HepG2 (cell line): ENCODE measurements at regions of chr7 and their contacts with region 1.

Region 1: DNA sequence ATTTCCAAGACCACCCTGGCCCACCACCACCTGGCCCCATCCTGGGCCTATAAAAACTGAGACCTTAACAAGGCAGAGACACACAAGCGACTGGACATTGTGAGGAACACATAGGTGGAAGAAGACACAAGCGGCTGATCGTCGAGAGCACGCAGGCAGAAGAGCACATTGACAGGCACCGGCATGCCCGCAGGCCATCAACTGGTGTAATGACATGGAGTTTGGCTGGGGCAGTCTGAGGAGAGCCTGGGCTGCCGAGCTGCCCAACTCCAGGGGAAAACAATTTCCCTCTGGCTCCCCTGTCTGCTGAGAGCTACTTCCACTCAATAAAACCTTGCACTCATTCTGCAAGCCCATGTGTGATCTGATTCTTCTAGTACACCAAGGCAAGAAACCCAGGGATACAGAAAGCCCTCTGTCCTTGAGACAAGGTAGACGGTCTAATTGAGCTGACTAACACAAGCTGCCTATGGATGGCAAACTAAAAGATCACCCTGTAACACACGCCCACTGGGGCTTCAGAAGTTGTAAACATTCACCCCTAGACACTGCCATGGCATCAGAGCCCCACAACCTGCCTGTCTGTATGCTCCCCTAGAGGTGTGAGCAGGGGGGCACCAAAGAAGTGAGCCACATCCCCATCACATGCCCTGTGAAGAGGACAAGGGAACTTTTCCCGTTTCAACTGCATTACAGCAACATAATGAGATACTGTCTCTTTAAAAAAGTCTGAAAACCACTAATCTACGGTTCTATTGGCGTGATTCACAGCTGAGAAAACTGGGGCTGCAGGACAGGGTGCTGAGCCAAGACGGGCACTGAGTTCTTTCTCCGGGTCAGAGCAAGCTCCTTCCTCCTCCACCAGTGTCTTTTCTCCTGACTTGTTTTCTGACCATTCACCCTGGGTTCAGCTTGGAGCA is 18.5 kb upstream of the TNS3 start:
- DNase-seq: no peak
- ATAC-seq: no peak
- H3K4me3 ChIP-seq: no peak overlapping the region
- H3K27ac ChIP-seq: no peak overlapping the region
- H3K4me1 ChIP-seq: peaks cover 72% of the 10 kb centered on the region
- H3K27me3 ChIP-seq: no peaks in the 10 kb centered on the region
- CTCF ChIP-seq: no peak
- EP300 ChIP-seq: no peak
- POLR2A ChIP-seq: no peak
- RAD21 ChIP-seq: no peak

Region 2: DNA sequence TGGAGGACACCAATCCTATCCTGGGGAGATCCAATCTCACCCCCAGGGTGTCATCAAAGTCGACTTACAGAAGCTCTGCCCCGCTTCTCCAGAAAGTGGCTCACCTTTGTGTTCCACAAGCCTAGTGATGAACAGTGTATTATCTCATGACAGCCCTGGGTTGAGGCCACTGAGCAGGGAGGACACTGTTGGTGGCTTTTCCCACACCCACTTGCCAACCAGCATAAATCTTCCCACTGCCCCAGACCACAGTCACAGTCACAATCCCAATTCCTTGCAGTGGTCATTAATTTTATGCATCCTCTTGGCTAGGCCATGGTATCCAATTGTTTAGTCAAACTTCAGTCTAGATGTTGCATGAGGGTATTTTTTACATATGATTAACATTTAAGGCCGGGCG is 36.9 kb before region 1 on chr7:
- CTCF ChIA-PET with region 1: no interaction called
- POLR2A ChIA-PET with region 1: no interaction called
- in situ Hi-C with region 1: no loop called
- intact Hi-C with region 1: no loop called
- DNase-seq: no peak
- ATAC-seq: no peak
- H3K4me3 ChIP-seq: no peak overlapping the region
- H3K27ac ChIP-seq: no peak overlapping the region
- H3K4me1 ChIP-seq: peaks cover 54% of the 10 kb centered on the region
- H3K27me3 ChIP-seq: no peaks in the 10 kb centered on the region
- CTCF ChIP-seq: no peak
- EP300 ChIP-seq: no peak
- POLR2A ChIP-seq: no peak
- RAD21 ChIP-seq: no peak

Region 3: DNA sequence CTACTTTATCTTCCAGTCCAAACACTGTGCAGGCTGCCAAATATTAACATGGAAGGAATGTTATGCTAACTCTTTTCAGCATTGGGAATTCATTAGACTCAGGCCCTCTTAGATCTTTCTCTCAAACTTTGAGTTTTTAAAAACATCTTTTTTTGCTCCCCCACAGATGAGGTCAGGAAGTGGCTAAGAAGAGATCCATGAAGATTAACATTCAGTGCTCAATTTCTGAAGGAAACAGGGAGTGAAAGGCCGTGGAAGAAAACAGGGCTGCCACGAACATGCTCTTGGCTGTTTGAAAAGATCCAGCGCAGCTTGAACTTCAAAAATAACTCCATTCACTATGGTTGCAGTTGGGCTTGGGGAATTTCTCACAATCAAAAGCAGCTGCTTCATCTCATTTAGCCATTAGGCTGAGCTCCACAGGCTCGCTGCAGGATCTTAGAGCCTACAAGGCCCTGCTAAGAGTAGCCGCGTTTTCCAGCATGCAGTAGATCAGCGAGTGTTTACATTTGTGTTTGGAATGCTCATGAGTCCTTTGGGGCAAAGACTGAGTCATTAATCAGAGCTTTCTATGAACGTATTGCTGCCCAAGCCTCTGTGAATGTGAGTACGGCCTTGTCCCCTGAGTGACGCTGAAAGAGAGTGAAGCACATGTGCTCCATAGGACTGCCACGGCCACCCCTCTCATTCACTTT is 22.6 kb after region 1 on chr7:
- CTCF ChIA-PET with region 1: no interaction called
- POLR2A ChIA-PET with region 1: interaction called, 4 read pairs
- in situ Hi-C with region 1: no loop called
- intact Hi-C with region 1: loop called (anchors 2 kb)
- DNase-seq: peak; percentile 89
- ATAC-seq: peak; percentile 93
- H3K4me3 ChIP-seq: peak overlapping the region in 2 of 3 experiments; percentile 13 to 46; a peak in 2 of 6 replicates
- H3K27ac ChIP-seq: peak overlapping the region; percentile 71
- H3K4me1 ChIP-seq: peaks cover 64% of the 10 kb centered on the region
- H3K27me3 ChIP-seq: no peaks in the 10 kb centered on the region
- CTCF ChIP-seq: no peak
- EP300 ChIP-seq: peak in 1 of 2 experiments; percentile 58; a peak in 1 of 4 replicates
- POLR2A ChIP-seq: peak in 1 of 2 experiments; percentile 54; a peak in 2 of 4 replicates
- RAD21 ChIP-seq: no peak

Region 4: GRCh38 chr7:47669061-47669891 is 68.8 kb after region 1 on chr7:
- CTCF ChIA-PET with region 1: no interaction called
- POLR2A ChIA-PET with region 1: no interaction called
- in situ Hi-C with region 1: no loop called
- intact Hi-C with region 1: loop called (anchors 10 kb)
- DNase-seq: peak; percentile 37
- ATAC-seq: peak; percentile 34; the same call in 1 of the 3 replicates
- H3K4me3 ChIP-seq: no peak overlapping the region
- H3K27ac ChIP-seq: no peak overlapping the region
- H3K4me1 ChIP-seq: peaks cover 63% of the 10 kb centered on the region
- H3K27me3 ChIP-seq: no peaks in the 10 kb centered on the region
- CTCF ChIP-seq: no peak
- EP300 ChIP-seq: no peak
- POLR2A ChIP-seq: no peak
- RAD21 ChIP-seq: no peak

Region 5: DNA sequence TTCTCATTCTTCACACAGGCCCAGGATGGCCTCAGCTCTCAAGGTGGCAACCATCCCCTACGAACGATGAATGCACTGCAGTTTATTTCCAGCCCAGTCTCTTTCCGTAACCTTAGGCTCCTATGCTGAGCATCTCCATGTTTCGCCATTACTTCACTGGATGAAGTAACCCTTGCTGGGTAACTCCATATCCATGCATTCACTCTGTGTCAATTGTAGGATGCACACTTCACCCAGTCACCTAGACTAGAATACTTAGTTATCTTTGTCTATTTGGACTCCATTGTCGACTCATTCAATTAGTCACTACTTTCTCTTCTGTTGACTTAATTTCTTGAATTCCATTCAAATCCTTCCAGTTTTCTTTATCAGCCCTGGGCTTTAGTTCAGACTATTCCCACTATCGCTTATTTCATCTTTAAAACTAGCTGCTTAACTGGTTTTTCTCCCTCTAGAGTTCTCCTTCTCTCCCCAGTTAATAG is 92.7 kb after region 1 on chr7:
- CTCF ChIA-PET with region 1: no interaction called
- POLR2A ChIA-PET with region 1: no interaction called
- in situ Hi-C with region 1: no loop called
- intact Hi-C with region 1: no loop called
- DNase-seq: no peak
- ATAC-seq: no peak
- H3K4me3 ChIP-seq: no peak overlapping the region
- H3K27ac ChIP-seq: no peak overlapping the region
- H3K4me1 ChIP-seq: peaks cover 25% of the 10 kb centered on the region
- H3K27me3 ChIP-seq: no peaks in the 10 kb centered on the region
- CTCF ChIP-seq: no peak
- EP300 ChIP-seq: no peak
- POLR2A ChIP-seq: no peak
- RAD21 ChIP-seq: no peak

Region 6: DNA sequence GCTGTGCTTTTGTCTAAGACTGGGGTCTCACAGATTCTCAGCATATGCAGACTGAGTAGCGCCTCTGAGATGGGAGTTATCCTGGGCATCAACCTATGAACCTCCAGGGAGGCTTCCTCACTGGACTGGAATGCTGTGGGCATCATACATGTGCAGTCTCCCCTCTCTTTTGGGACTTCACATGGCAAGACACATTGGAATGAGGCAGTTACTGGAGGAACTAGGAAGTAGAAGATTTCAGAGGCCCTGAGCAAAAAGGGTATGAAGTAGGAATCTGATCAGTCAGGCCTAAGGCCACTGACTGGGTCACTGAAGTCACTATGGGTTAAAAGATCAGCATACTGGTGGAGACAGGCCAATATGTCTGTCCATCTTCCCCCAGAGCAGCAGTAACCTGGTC is 414.8 kb after region 1 on chr7:
- CTCF ChIA-PET with region 1: no interaction called
- POLR2A ChIA-PET with region 1: no interaction called
- in situ Hi-C with region 1: no loop called
- intact Hi-C with region 1: no loop called
- DNase-seq: no peak
- ATAC-seq: no peak
- H3K4me3 ChIP-seq: no peak overlapping the region
- H3K27ac ChIP-seq: no peak overlapping the region
- H3K4me1 ChIP-seq: no peaks in the 10 kb centered on the region
- H3K27me3 ChIP-seq: no peaks in the 10 kb centered on the region
- CTCF ChIP-seq: no peak
- EP300 ChIP-seq: no peak
- POLR2A ChIP-seq: no peak
- RAD21 ChIP-seq: no peak